ENCODE measurements at regions of chr22 and their contacts with region 1.

Region 1: DNA sequence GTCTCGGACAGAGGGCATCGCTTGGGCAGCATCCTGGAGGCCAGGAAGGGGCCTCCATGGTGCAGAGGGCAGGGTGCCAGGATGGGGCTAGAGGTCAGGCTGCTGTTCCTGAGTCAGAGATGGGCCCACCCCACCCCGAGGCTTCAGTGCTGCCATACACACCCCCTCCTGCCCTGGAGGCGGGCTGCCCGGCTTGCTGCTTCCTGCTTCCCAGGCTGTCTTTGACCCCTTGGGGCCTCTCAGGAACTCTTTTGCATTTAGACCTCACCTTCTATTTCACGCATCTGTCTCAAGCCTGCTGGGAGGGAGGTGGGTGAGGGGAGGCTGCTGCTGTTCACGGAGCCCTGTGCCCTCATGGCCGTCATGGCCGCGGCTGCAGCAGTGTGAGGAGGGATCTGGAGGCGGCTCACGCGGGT is 6.6 kb upstream of the GRAMD4 start:
- DNase-seq: peak; percentile 64
- H3K4me3 Mint-ChIP-seq: peak overlapping the region; percentile 84
- H3K27ac Mint-ChIP-seq: peak overlapping the region; percentile 91
- H3K4me1 Mint-ChIP-seq: peaks cover 26% of the 10 kb centered on the region
- H3K27me3 Mint-ChIP-seq: no peaks in the 10 kb centered on the region

Region 2: DNA sequence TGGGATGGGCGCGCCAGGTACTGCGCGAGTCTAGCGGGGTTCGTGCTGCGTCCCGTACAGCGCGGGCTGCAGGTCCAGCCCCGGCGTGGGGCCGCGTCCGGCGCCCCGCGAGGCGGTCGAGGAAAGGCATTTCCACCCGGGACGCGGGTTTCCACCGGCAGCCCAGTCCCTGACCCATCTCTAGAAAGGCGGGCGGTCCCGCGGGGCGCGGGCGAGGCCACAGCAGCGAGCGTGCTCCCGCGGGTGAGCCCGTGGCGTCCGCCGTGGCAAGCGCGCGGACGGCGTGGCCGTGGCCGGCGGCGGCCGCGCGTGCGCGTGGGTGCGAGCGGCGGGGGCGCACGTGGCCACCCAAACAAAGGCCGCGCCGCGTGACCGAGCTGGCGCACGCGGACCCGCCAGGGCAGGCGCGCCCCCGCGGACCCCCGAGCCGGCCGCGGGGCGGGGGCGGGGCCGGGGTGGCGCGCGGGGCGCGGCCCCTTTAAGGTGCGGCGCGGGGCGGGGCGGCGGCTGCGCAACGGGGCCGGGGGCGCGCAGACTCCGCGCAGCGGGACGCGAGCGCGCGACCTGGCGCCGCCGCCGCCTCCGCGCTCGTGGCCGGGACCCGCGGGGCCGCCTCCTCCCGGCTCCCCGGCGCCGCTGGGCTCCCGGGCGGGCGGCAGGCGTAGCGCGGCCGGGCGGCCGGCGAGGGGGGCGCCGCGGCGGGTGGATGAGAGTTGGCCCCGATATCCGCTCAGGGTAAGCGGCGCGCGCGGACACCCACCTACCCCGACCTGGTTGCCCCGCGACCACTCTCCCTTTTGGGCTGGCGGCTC is 36.9 kb before region 1 on chr22:
- CTCF ChIA-PET with region 1: no interaction called
- POLR2A ChIA-PET with region 1: no interaction called
- intact Hi-C with region 1: loop called (anchors 5 kb)
- DNase-seq: peak; percentile 53
- H3K4me3 Mint-ChIP-seq: peak overlapping the region; percentile 72
- H3K27ac Mint-ChIP-seq: no peak overlapping the region
- H3K4me1 Mint-ChIP-seq: peaks cover 18% of the 10 kb centered on the region
- H3K27me3 Mint-ChIP-seq: no peaks in the 10 kb centered on the region

Region 3: DNA sequence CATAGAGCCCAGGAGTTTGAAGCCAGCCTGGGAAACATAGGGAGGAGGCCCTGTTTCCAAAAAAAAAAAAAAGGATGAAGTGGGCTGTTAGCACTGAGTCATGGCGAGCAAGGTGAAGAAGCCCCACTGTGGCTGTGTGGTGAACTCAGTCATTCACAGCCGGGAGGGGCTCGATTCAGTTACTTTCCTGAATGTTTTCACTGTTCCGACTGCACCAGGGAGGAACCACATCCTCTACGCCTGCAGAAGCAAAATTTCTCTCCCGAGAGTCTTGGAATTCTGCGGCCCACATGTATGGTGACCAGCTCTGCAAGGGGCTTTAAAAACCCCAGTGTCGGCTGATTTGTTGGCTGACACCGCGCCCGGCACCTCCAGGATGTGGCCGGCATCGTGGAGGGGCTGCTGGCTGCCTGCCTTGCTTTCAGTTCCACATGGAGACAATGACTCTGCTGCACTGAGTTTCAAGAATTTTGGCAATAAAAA is 21.2 kb before region 1 on chr22:
- CTCF ChIA-PET with region 1: no interaction called
- POLR2A ChIA-PET with region 1: no interaction called
- intact Hi-C with region 1: loop called (anchors 1 kb)
- DNase-seq: peak; percentile 70
- H3K4me3 Mint-ChIP-seq: peak overlapping the region; percentile 56
- H3K27ac Mint-ChIP-seq: peak overlapping the region; percentile 47
- H3K4me1 Mint-ChIP-seq: peaks cover 25% of the 10 kb centered on the region
- H3K27me3 Mint-ChIP-seq: no peaks in the 10 kb centered on the region

Region 4: GRCh38 chr22:46638601-46639431 is 25.2 kb after region 1 on chr22:
- CTCF ChIA-PET with region 1: no interaction called
- POLR2A ChIA-PET with region 1: no interaction called
- intact Hi-C with region 1: no loop called
- DNase-seq: no peak
- H3K4me3 Mint-ChIP-seq: no peak overlapping the region
- H3K27ac Mint-ChIP-seq: no peak overlapping the region
- H3K4me1 Mint-ChIP-seq: no peaks in the 10 kb centered on the region
- H3K27me3 Mint-ChIP-seq: no peaks in the 10 kb centered on the region

Region 5: GRCh38 chr22:46661221-46661851 is 47.7 kb after region 1 on chr22:
- CTCF ChIA-PET with region 1: no interaction called
- POLR2A ChIA-PET with region 1: no interaction called
- intact Hi-C with region 1: loop called (anchors 1 kb)
- DNase-seq: peak; percentile 82
- H3K4me3 Mint-ChIP-seq: peak overlapping the region; percentile 57
- H3K27ac Mint-ChIP-seq: peak overlapping the region; percentile 94
- H3K4me1 Mint-ChIP-seq: peaks cover 23% of the 10 kb centered on the region
- H3K27me3 Mint-ChIP-seq: no peaks in the 10 kb centered on the region

Region 6: DNA sequence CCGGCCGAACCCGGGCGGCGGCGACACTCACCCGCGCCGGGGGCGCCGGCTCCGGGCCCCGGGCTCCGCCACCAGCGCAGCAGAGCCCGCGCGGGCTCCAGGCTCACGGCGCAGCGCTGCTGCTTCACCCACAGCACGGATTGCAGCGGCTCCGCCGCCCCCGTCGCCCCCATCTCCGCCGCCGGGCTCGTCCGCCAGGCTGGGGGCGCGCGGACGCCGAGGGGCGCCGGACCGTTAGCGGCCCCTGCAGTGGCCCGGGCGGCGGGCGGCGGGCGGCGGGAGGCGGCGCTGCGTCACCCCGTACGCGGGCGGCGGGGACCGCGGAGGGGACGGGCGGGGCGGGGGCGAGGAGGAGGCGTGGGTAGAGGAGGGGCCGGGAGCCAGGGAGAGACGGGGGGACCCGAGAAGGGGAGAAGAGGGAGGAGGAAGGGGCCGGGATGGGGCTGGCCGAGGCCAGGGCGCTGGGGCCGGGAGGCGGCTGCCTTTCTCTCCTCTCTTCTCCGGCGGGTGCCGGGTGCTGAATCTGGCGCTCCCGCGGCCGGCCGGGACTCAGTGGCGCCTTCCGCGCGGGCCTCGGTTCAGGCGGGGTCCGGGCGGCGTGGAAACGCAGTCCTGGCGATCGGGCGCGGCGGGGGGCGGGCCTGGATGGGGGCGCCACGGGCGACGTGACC is 124.5 kb after region 1 on chr22 and contains the start of gene CERK:
- CTCF ChIA-PET with region 1: no interaction called
- POLR2A ChIA-PET with region 1: no interaction called
- intact Hi-C with region 1: loop called (anchors 5 kb)
- DNase-seq: peak; percentile 72
- H3K4me3 Mint-ChIP-seq: peak within 1 kb of the TSS; percentile 96
- H3K27ac Mint-ChIP-seq: peak within 1 kb of the TSS; percentile 93
- H3K4me1 Mint-ChIP-seq: peaks cover 33% of the 10 kb centered on the region
- H3K27me3 Mint-ChIP-seq: no peaks in the 10 kb centered on the region
- total RNA-seq, gene CERK: 54.4 to 55.0 TPM

Measured in activated CD4-positive, alpha-beta memory T cell treated with anti-CD3 and anti-CD28 coated beads for 36 hours (primary cell).